ENCODE measurements at regions of chr17 and their contacts with region 1.

Region 1: GRCh38 chr17:75784473-75785015 is at the start of gene UNK:
- DNase-seq: peak; percentile 98
- ATAC-seq: peak; percentile 72
- H3K4me3 Mint-ChIP-seq: peak within 1 kb of the TSS; percentile 91
- H3K27ac Mint-ChIP-seq: peak within 1 kb of the TSS; percentile 100
- H3K4me1 Mint-ChIP-seq: peaks cover 50% of the 10 kb centered on the region
- H3K27me3 Mint-ChIP-seq: peaks cover 3% of the 10 kb centered on the region
- total RNA-seq, gene UNK: 30.2 to 31.0 TPM

Region 2: GRCh38 chr17:75795820-75796607 is 11.5 kb after region 1 on chr17:
- CTCF ChIA-PET with region 1: interaction called, 13 read pairs
- POLR2A ChIA-PET with region 1: interaction called, 183 read pairs
- DNase-seq: no peak
- ATAC-seq: no peak
- H3K4me3 Mint-ChIP-seq: no peak overlapping the region
- H3K27ac Mint-ChIP-seq: no peak overlapping the region
- H3K4me1 Mint-ChIP-seq: peaks cover 31% of the 10 kb centered on the region
- H3K27me3 Mint-ChIP-seq: no peaks in the 10 kb centered on the region

Region 3: DNA sequence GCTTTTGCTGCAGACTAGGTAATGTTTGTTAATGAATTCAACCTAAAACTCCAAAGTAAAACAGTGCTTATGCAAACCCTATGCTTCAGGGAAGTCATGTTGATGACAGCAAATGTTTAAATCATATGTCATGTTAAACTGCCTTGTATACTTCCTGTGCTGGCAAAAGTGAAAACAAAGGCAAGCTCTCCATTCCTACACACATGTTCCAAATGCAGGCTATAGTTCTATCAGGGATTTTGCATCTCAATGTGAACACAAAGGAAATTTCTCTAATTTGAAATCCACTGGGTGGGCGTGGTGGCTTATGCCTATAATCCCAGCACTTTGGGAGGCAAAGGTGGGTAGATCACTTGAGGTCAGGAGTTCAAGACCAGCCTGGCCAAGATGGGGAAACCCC is 19.3 kb after region 1 on chr17:
- CTCF ChIA-PET with region 1: interaction called, 12 read pairs
- POLR2A ChIA-PET with region 1: interaction called, 7 read pairs
- DNase-seq: no peak
- ATAC-seq: no peak
- H3K4me3 Mint-ChIP-seq: no peak overlapping the region
- H3K27ac Mint-ChIP-seq: no peak overlapping the region
- H3K4me1 Mint-ChIP-seq: peaks cover 11% of the 10 kb centered on the region
- H3K27me3 Mint-ChIP-seq: no peaks in the 10 kb centered on the region

Region 4: DNA sequence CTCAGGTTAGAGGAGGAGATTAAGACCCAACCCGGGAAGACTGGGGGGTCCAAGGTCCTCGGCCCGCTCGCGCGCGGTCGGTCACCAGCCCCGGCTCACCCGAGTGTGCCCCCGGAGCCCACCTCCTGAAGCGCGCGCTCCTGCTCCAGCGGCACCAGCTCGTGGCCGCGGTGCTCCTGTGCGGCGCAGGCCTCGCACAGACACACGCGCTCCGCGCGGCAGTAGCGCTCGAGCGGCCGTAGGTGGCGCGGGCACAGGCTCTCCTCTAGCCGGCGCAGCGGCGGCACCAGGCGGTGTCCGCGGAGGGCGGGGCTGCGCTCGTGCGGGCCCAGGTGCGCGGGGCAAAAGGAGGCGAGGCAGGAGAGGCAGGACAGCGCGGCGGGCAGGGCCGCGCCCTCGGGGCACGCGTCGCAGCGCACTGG is 93.2 kb after region 1 on chr17:
- CTCF ChIA-PET with region 1: interaction called, 10 read pairs
- POLR2A ChIA-PET with region 1: interaction called, 4 read pairs
- DNase-seq: peak; percentile 82
- ATAC-seq: peak; percentile 77
- H3K4me3 Mint-ChIP-seq: peak overlapping the region; percentile 91
- H3K27ac Mint-ChIP-seq: peak overlapping the region; percentile 92
- H3K4me1 Mint-ChIP-seq: peaks cover 54% of the 10 kb centered on the region
- H3K27me3 Mint-ChIP-seq: peaks cover 8% of the 10 kb centered on the region

Measured in activated CD8-positive, alpha-beta T cell treated with anti-CD3 and anti-CD28 coated beads, Interleukin-2, amount 10 ng/mL, durations not matched to agents 7 days and 5 days (primary cell).